Mammary epithelial cell (primary cell): ENCODE measurements at regions of chr9 and their contacts with region 1.

Region 1: GRCh38 chr9:92669890-92670708 is at the start of gene IPPK:
- DNase-seq: peak; percentile 98
- H3K4me3 ChIP-seq: peak within 1 kb of the TSS; percentile 69 to 97 (median 91)
- H3K27ac ChIP-seq: peak within 1 kb of the TSS; percentile 93
- H3K4me1 ChIP-seq: peaks cover 14% of the 10 kb centered on the region
- H3K27me3 ChIP-seq: no peaks in the 10 kb centered on the region
- CTCF ChIP-seq: no peak
- total RNA-seq, gene IPPK: 13.4 to 25.0 TPM

Region 2: GRCh38 chr9:92488681-92489550 is 181.2 kb before region 1 on chr9:
- CTCF ChIA-PET with region 1: no interaction called
- dilution Hi-C with region 1: no loop called
- in situ Hi-C with region 1: no loop called
- intact Hi-C with region 1: no loop called
- DNase-seq: no peak
- H3K4me3 ChIP-seq: no peak overlapping the region
- H3K27ac ChIP-seq: no peak overlapping the region
- H3K4me1 ChIP-seq: peaks cover 3% of the 10 kb centered on the region
- H3K27me3 ChIP-seq: no peaks in the 10 kb centered on the region
- CTCF ChIP-seq: no peak

Region 3: GRCh38 chr9:92680166-92681119 is 10.3 kb after region 1 on chr9:
- CTCF ChIA-PET with region 1: no interaction called
- dilution Hi-C with region 1: no loop called
- in situ Hi-C with region 1: no loop called
- intact Hi-C with region 1: loop called (anchors 1 kb)
- DNase-seq: peak; percentile 81
- H3K4me3 ChIP-seq: no peak overlapping the region
- H3K27ac ChIP-seq: peak overlapping the region; percentile 77
- H3K4me1 ChIP-seq: peaks cover 23% of the 10 kb centered on the region
- H3K27me3 ChIP-seq: no peaks in the 10 kb centered on the region
- CTCF ChIP-seq: no peak

Region 4: DNA sequence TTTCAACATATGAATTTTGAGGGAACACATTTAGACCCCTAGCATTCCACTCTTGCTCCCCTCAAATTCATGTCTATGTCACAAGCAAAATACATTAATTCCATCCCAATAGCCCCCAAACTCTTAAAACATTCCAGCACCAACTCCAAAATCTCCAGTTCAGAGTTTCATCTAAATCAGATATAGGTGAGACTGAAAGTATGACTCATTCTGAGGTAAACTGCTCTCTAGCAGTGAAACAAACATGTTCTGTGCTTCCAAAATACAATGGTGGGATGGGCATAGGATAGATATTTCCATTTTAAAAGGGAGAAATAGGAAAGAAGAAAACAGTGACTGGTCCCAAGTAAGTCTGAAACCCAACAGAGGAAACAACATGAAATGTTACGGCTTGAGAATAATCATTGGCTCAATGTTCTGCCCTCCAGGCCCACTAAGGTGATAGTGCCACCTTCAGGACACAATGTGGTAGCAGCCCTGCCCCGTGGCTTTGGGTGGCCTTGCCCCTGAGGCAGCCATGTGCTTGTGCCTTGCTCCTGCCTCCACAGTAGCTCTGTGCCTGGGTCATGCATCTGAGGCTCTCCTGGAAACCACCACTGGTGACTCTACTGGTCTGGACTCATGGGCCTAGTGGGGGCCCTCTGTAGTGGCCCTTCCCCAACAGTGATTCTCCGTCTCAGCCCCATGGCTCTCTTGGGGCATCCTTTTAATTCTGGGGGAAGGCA is 36.3 kb after region 1 on chr9:
- CTCF ChIA-PET with region 1: no interaction called
- dilution Hi-C with region 1: no loop called
- in situ Hi-C with region 1: no loop called
- intact Hi-C with region 1: loop called (anchors 1 kb)
- DNase-seq: peak; percentile 82
- H3K4me3 ChIP-seq: no peak overlapping the region
- H3K27ac ChIP-seq: peak overlapping the region; percentile 94
- H3K4me1 ChIP-seq: peaks cover 52% of the 10 kb centered on the region
- H3K27me3 ChIP-seq: no peaks in the 10 kb centered on the region
- CTCF ChIP-seq: peak; percentile 78 to 82

Region 5: GRCh38 chr9:92716557-92716956 is 46.5 kb after region 1 on chr9:
- CTCF ChIA-PET with region 1: no interaction called
- dilution Hi-C with region 1: no loop called
- in situ Hi-C with region 1: no loop called
- intact Hi-C with region 1: loop called (anchors 2 kb)
- DNase-seq: peak; percentile 46
- H3K4me3 ChIP-seq: no peak overlapping the region
- H3K27ac ChIP-seq: peak overlapping the region; percentile 29
- H3K4me1 ChIP-seq: peaks cover 30% of the 10 kb centered on the region
- H3K27me3 ChIP-seq: no peaks in the 10 kb centered on the region
- CTCF ChIP-seq: peak; percentile 83 to 96

Region 6: GRCh38 chr9:92728831-92729734 is 59.0 kb after region 1 on chr9:
- CTCF ChIA-PET with region 1: no interaction called
- dilution Hi-C with region 1: loop called (anchors 5 kb)
- in situ Hi-C with region 1: no loop called
- intact Hi-C with region 1: no loop called
- DNase-seq: no peak
- H3K4me3 ChIP-seq: no peak overlapping the region
- H3K27ac ChIP-seq: no peak overlapping the region
- H3K4me1 ChIP-seq: peaks cover 6% of the 10 kb centered on the region
- H3K27me3 ChIP-seq: no peaks in the 10 kb centered on the region
- CTCF ChIP-seq: peak; percentile 30 to 46